Activated CD4-positive, alpha-beta T cell treated with anti-CD3 and anti-CD28 coated beads for 36 hours (primary cell): ENCODE measurements at regions of chr10 and their contacts with region 1.

Region 1: GRCh38 chr10:119650692-119651513 is at the start of gene BAG3:
- DNase-seq: peak; percentile 91
- ATAC-seq: peak; percentile 48
- H3K4me3 Mint-ChIP-seq: peak within 1 kb of the TSS; percentile 84
- H3K27ac Mint-ChIP-seq: peak within 1 kb of the TSS; percentile 95
- H3K4me1 Mint-ChIP-seq: peaks cover 39% of the 10 kb centered on the region
- H3K27me3 Mint-ChIP-seq: no peaks in the 10 kb centered on the region
- total RNA-seq, gene BAG3: 23.8 to 30.7 TPM

Region 2: GRCh38 chr10:118850418-118851061 is 800.4 kb before region 1 on chr10:
- CTCF ChIA-PET with region 1: no interaction called
- POLR2A ChIA-PET with region 1: no interaction called
- intact Hi-C with region 1: no loop called
- DNase-seq: peak; percentile 93
- ATAC-seq: peak; percentile 90
- H3K4me3 Mint-ChIP-seq: no peak overlapping the region
- H3K27ac Mint-ChIP-seq: no peak overlapping the region
- H3K4me1 Mint-ChIP-seq: no peaks in the 10 kb centered on the region
- H3K27me3 Mint-ChIP-seq: peaks cover 2% of the 10 kb centered on the region

Region 3: GRCh38 chr10:119165171-119166110 is 485.5 kb before region 1 on chr10 and contains the start of gene SFXN4:
- CTCF ChIA-PET with region 1: no interaction called
- POLR2A ChIA-PET with region 1: no interaction called
- intact Hi-C with region 1: loop called in 1 of 2 experiments (anchors 1 kb)
- DNase-seq: peak; percentile 87
- ATAC-seq: peak; percentile 94
- H3K4me3 Mint-ChIP-seq: peak within 1 kb of the TSS; percentile 86
- H3K27ac Mint-ChIP-seq: peak within 1 kb of the TSS; percentile 94
- H3K4me1 Mint-ChIP-seq: peaks cover 40% of the 10 kb centered on the region
- H3K27me3 Mint-ChIP-seq: no peaks in the 10 kb centered on the region
- total RNA-seq, gene SFXN4: 38.7 to 44.7 TPM

Region 4: DNA sequence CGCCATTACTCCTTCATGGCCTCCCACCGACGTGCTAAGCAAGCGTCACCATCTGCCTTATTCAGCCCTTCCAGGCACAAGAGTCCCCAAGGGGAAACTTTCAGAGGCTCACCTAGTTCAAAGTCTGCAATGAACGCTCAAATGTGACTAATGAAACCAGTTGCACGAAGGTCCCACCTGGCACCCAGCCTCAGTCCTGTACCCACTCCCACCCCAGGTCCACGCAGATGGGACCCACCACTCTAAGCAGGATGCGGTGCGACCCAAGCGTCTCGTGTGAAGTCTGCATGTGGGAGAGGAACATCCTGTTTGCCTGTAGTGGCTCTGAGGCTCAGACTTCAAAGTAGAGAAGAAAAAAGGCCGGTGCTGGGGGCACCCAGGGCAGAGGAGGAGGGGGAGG is 148.7 kb before region 1 on chr10:
- CTCF ChIA-PET with region 1: no interaction called
- POLR2A ChIA-PET with region 1: no interaction called
- intact Hi-C with region 1: loop called in 1 of 2 experiments (anchors 2 kb)
- DNase-seq: peak; percentile 87
- ATAC-seq: peak; percentile 78
- H3K4me3 Mint-ChIP-seq: peak overlapping the region; percentile 56
- H3K27ac Mint-ChIP-seq: peak overlapping the region; percentile 98
- H3K4me1 Mint-ChIP-seq: peaks cover 96% of the 10 kb centered on the region
- H3K27me3 Mint-ChIP-seq: no peaks in the 10 kb centered on the region

Region 5: GRCh38 chr10:119705434-119705831 is 54.5 kb after region 1 on chr10:
- CTCF ChIA-PET with region 1: no interaction called
- POLR2A ChIA-PET with region 1: interaction called, 3 read pairs
- intact Hi-C with region 1: loop called in 1 of 2 experiments (anchors 2 kb)
- DNase-seq: peak; percentile 51
- ATAC-seq: peak; percentile 28
- H3K4me3 Mint-ChIP-seq: peak overlapping the region; percentile 41
- H3K27ac Mint-ChIP-seq: peak overlapping the region; percentile 96
- H3K4me1 Mint-ChIP-seq: peaks cover 82% of the 10 kb centered on the region
- H3K27me3 Mint-ChIP-seq: no peaks in the 10 kb centered on the region

Region 6: GRCh38 chr10:119872860-119873681 is 222.2 kb after region 1 on chr10:
- CTCF ChIA-PET with region 1: no interaction called
- POLR2A ChIA-PET with region 1: interaction called, 3 read pairs
- intact Hi-C with region 1: loop called in 1 of 2 experiments (anchors 1 kb)
- DNase-seq: peak; percentile 94
- ATAC-seq: peak; percentile 95
- H3K4me3 Mint-ChIP-seq: peak overlapping the region; percentile 79
- H3K27ac Mint-ChIP-seq: peak overlapping the region; percentile 87
- H3K4me1 Mint-ChIP-seq: peaks cover 33% of the 10 kb centered on the region
- H3K27me3 Mint-ChIP-seq: no peaks in the 10 kb centered on the region